ENCODE measurements at regions of chr11 and their contacts with region 1.

Region 1: DNA sequence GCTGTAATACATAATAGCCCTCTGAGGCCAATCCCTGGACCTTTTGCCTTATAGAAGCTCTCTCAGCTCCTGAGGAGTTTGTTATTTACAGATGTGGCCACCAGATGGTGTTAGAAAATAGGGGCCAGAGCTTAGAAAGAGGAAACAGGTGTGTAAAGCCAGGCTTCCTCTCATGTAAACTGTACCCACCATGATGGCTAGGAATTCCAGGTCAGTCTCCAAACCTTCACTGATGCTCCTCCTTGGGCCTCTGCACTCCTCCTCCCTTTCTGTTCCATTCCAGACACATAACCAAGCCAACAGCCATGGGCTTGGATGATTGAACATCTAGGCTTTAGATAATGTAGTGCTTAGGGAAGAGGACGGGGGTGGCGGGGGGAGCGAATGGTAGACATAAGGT is 39.7 kb downstream of the USP35 start:
- DNase-seq: peak; percentile 52 to 73 (median 64)
- ATAC-seq: peak; percentile 85
- H3K4me3 ChIP-seq: no peak overlapping the region
- H3K27ac ChIP-seq: no peak overlapping the region
- H3K4me1 ChIP-seq: peaks cover 6 to 23% of the 10 kb centered on the region in 2 experiments; a peak in 4 of 5 replicates
- H3K27me3 ChIP-seq: no peaks in the 10 kb centered on the region
- CTCF ChIP-seq: peak; percentile 70 to 82 (median 71)
- EP300 ChIP-seq: no peak
- POLR2A ChIP-seq: no peak
- RAD21 ChIP-seq: peak; percentile 92 to 94

Region 2: GRCh38 chr11:78277314-78277994 is 49.0 kb after region 1 on chr11:
- CTCF ChIA-PET with region 1: no interaction called
- POLR2A ChIA-PET with region 1: no interaction called
- in situ Hi-C with region 1: no loop called
- intact Hi-C with region 1: no loop called
- DNase-seq: no peak
- ATAC-seq: peak; percentile 25
- H3K4me3 ChIP-seq: no peak overlapping the region
- H3K27ac ChIP-seq: no peak overlapping the region
- H3K4me1 ChIP-seq: peaks cover 5 to 7% of the 10 kb centered on the region in 2 experiments; a peak in 2 of 5 replicates
- H3K27me3 ChIP-seq: no peaks in the 10 kb centered on the region
- CTCF ChIP-seq: no peak
- EP300 ChIP-seq: no peak
- POLR2A ChIP-seq: no peak
- RAD21 ChIP-seq: no peak

Region 3: DNA sequence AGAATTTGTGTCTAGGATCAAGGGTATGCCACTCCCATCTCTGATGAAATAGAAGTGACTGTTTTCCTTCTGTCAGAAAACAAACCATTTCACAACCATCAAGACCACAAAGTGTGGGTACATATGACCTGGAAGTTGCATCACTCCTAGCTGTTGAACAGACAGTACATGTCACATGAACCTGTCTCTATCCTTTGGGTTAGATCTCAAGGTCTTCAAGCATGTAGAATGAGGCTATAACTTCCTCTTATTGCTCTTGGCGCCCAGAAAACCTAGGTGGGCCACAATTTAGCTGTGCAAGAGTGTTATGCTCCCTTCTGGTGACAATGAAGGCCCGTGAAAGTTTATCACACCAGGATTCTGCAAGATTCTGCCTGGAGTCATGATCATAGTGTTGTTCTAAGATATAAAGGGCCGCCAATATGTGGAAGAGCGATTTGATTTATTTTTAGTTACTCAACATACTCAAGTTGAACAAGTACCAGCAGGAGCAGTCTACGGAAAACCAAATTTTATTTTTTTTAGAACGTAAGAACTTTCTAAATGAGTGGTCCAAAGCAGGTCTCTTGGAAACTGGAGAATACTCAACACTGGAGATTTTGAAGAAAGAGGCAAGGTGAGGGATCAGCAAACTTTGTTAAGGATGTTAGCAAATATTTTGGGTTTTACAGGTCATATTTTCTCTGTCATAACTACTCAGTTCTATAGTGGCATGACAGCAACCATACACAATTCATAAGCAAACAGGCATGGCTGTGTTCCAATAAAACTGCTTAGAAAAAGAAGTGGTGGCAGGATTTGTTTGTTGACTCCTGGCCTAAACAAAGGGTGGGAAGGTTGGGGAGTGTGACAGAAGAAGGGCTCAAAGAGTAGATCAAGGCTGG is 62.1 kb after region 1 on chr11:
- CTCF ChIA-PET with region 1: no interaction called
- POLR2A ChIA-PET with region 1: no interaction called
- in situ Hi-C with region 1: no loop called
- intact Hi-C with region 1: loop called (anchors 1 kb)
- DNase-seq: peak; percentile 42 to 83 (median 52)
- ATAC-seq: peak; percentile 84
- H3K4me3 ChIP-seq: no peak overlapping the region
- H3K27ac ChIP-seq: peak overlapping the region; percentile 65
- H3K4me1 ChIP-seq: peaks cover 18 to 70% of the 10 kb centered on the region in 2 experiments
- H3K27me3 ChIP-seq: no peaks in the 10 kb centered on the region
- CTCF ChIP-seq: no peak
- EP300 ChIP-seq: peak; percentile 100
- POLR2A ChIP-seq: no peak
- RAD21 ChIP-seq: peak in 1 of 2 experiments; percentile 59

Region 4: DNA sequence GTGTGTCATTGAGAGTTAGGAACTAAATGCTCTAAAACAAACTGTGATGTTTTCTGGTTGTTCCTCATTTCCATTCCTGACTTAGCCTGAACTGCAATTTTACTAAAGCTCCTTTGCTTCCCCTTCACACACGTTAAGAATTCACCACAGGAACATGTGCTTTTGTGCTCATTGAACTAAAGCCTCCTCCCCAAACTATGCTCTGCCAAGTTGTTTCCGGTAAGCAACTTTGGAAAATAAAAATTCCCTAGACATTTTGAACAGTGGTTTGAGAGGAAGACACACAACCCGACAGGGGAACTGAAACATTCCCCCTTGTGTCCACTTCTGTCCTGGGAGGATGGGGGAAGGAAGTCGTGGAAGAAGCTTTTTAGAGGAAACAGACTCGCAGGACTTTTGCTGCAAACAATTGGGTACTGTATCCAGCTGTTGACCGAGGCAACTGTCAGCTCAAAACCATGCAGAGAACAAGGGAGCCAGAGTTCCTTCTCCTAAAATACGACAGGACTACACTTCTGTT is 122.2 kb after region 1 on chr11:
- CTCF ChIA-PET with region 1: no interaction called
- POLR2A ChIA-PET with region 1: no interaction called
- in situ Hi-C with region 1: no loop called
- intact Hi-C with region 1: loop called (anchors 2 kb)
- DNase-seq: peak in 1 of 4 experiments; percentile 40
- ATAC-seq: peak; percentile 9
- H3K4me3 ChIP-seq: peak overlapping the region; percentile 21; the same call in 1 of the 2 replicates
- H3K27ac ChIP-seq: peak overlapping the region; percentile 84
- H3K4me1 ChIP-seq: peaks cover 12 to 82% of the 10 kb centered on the region in 2 experiments
- H3K27me3 ChIP-seq: no peaks in the 10 kb centered on the region
- CTCF ChIP-seq: no peak
- EP300 ChIP-seq: no peak
- POLR2A ChIP-seq: no peak
- RAD21 ChIP-seq: 0 out of 4 replicates have a peak, but pooled peaks of 1 of the 2 experiments have one; percentile 6

Region 5: GRCh38 chr11:78432058-78432515 is 203.6 kb after region 1 on chr11:
- CTCF ChIA-PET with region 1: interaction called, 18 read pairs
- POLR2A ChIA-PET with region 1: interaction called, 3 read pairs
- in situ Hi-C with region 1: no loop called
- intact Hi-C with region 1: no loop called
- DNase-seq: peak in 1 of 4 experiments; percentile 44
- ATAC-seq: peak; percentile 64
- H3K4me3 ChIP-seq: no peak overlapping the region
- H3K27ac ChIP-seq: no peak overlapping the region
- H3K4me1 ChIP-seq: peaks cover 14 to 28% of the 10 kb centered on the region in 2 experiments; a peak in 4 of 5 replicates
- H3K27me3 ChIP-seq: no peaks in the 10 kb centered on the region
- CTCF ChIP-seq: peak; percentile 43 to 58 (median 54)
- EP300 ChIP-seq: no peak
- POLR2A ChIP-seq: no peak
- RAD21 ChIP-seq: peak; percentile 45